Esophagus muscularis mucosa (tissue), 4 donors: ENCODE measurements at regions of chr3 and their contacts with region 1.

Region 1: GRCh38 chr3:150238998-150239619 is 169.0 kb upstream of the TSC22D2 start:
- DNase-seq: no peak
- H3K4me3 ChIP-seq: no peak overlapping the region
- H3K27ac ChIP-seq: peak overlapping the region; percentile 74 to 77 (median 76)
- H3K4me1 ChIP-seq: peaks cover 26 to 71% (median 62%) of the 10 kb centered on the region in 4 donors
- H3K27me3 ChIP-seq: no peaks in the 10 kb centered on the region
- CTCF ChIP-seq: peak in 2 of 3 experiments; percentile 4 to 7
- EP300 ChIP-seq: no peak
- POLR2A ChIP-seq: no peak

Region 2: GRCh38 chr3:150146991-150147761 is 91.9 kb before region 1 on chr3:
- intact Hi-C with region 1: no loop called
- DNase-seq: peak; percentile 68
- H3K4me3 ChIP-seq: no peak overlapping the region
- H3K27ac ChIP-seq: peak overlapping the region in 3 of 4 donors; percentile 6 to 17 (median 7)
- H3K4me1 ChIP-seq: peaks cover 3 to 15% (median 8%) of the 10 kb centered on the region in 4 donors
- H3K27me3 ChIP-seq: no peaks in the 10 kb centered on the region
- CTCF ChIP-seq: no peak
- EP300 ChIP-seq: no peak
- POLR2A ChIP-seq: no peak

Region 3: DNA sequence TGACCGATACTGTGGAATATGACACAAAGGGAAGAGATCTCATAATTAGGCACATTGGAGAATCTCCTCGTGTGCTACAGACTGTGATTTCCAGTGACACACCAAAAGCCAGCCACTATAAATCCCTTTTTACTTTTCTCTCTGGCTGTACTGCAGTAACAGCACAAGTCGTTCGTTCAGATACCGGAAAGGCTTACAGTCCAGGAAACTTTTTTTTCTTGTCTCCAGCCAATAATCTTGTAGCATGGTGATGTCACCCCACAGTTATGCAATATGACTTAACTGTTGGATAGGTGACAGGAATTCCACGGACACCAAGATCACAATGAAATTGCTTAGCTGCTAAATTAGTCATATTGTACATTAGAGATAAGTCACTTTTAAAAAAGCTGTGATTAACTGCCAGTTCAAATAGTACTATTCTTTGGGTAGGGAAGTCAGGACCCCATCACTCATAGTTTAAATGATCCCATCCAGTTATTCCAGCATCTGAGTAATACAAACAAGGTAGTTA is 132.7 kb after region 1 on chr3:
- intact Hi-C with region 1: loop called (anchors 10 kb)
- DNase-seq: no peak
- H3K4me3 ChIP-seq: peak overlapping the region; percentile 33 to 51 (median 44)
- H3K27ac ChIP-seq: peak overlapping the region; percentile 83 to 86 (median 84)
- H3K4me1 ChIP-seq: peaks cover 30 to 35% (median 30%) of the 10 kb centered on the region in 4 donors
- H3K27me3 ChIP-seq: no peaks in the 10 kb centered on the region
- CTCF ChIP-seq: no peak
- EP300 ChIP-seq: no peak
- POLR2A ChIP-seq: peak; percentile 17

Region 4: GRCh38 chr3:150480877-150481276 is 241.8 kb after region 1 on chr3:
- intact Hi-C with region 1: no loop called
- DNase-seq: no peak
- H3K4me3 ChIP-seq: no peak overlapping the region
- H3K27ac ChIP-seq: no peak overlapping the region
- H3K4me1 ChIP-seq: no peaks in the 10 kb centered on the region
- H3K27me3 ChIP-seq: no peaks in the 10 kb centered on the region
- CTCF ChIP-seq: no peak
- EP300 ChIP-seq: no peak
- POLR2A ChIP-seq: no peak

Region 5: DNA sequence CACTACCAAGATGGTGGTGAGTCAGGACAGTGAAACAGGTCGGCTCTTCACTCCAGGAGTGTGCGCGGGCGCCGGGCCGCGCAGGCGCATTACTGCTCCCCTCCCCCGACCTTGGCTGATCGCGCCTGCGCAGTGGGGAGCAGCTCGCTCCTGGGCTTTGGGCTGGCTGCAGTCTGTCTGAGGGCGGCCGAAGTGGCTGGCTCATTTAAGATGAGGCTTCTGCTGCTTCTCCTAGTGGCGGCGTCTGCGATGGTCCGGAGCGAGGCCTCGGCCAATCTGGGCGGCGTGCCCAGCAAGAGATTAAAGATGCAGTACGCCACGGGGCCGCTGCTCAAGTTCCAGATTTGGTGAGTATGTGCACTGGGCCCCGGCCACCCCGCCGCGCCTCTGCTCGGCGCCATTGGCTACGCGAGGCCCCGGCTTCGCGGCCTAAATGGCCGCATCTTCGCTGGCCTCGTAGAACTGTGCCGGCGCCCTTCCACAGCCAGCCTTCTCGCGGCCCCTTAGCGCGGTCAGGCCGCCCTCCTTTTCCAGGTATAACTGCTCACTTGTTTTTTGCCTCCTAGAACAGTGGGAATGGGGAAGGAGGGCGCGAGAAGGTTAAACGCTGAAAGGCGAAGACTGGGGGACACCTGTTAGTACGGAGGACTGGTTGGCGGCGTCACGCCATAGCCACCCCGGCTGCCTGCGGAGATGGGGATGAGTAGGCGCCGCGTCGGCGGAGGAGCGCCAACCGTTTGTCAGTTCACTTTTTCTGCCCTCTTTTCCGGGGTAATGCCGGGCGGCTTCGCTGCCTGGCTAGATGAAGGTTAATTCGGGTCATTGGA is 364.3 kb after region 1 on chr3 and contains the start of gene SELENOT:
- intact Hi-C with region 1: no loop called
- DNase-seq: peak; percentile 98
- H3K4me3 ChIP-seq: peak within 1 kb of the TSS; percentile 70 to 84 (median 79)
- H3K27ac ChIP-seq: peak within 1 kb of the TSS; percentile 90 to 98 (median 96)
- H3K4me1 ChIP-seq: peaks cover 26 to 63% (median 51%) of the 10 kb centered on the region in 4 donors
- H3K27me3 ChIP-seq: no peaks in the 10 kb centered on the region
- CTCF ChIP-seq: peak in 1 of 3 experiments; percentile 28
- EP300 ChIP-seq: no peak
- POLR2A ChIP-seq: peak; percentile 76
- total RNA-seq, gene SELENOT: 34.5 to 124 (median 67.5) TPM

Region 6: DNA sequence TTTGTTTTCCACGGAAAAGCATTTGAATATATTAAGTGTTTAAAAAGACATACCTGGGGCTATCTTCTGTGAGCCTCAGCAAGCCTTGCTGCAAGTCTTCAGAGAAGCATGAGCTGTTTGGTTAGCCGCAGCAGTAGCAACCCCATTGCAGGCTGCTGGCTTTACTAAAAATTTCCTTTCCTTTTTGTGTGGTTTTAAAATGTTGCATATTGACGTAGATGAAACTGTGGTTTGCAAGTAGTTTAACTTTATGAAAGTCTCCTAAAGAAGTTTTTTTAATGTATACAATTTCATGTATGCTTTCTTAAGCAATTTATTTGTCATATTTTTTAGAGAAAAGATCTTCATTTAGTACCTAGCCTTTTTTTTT is 963.9 kb after region 1 on chr3 and contains the start of gene GPR171:
- intact Hi-C with region 1: no loop called
- DNase-seq: no peak
- H3K4me3 ChIP-seq: no peak within 1 kb of the TSS
- H3K27ac ChIP-seq: no peak within 1 kb of the TSS
- H3K4me1 ChIP-seq: no peaks in the 10 kb centered on the region
- H3K27me3 ChIP-seq: no peaks in the 10 kb centered on the region
- CTCF ChIP-seq: no peak
- EP300 ChIP-seq: no peak
- POLR2A ChIP-seq: no peak
- total RNA-seq, gene GPR171: 0.46 to 3.7 (median 1.3) TPM